Activated CD8-positive, alpha-beta memory T cell treated with anti-CD3 and anti-CD28 coated beads, Interleukin-2, amount 10 ng/mL, durations not matched to agents 7 days and 5 days (primary cell): ENCODE measurements at regions of chr14 and their contacts with region 1.

Region 1: DNA sequence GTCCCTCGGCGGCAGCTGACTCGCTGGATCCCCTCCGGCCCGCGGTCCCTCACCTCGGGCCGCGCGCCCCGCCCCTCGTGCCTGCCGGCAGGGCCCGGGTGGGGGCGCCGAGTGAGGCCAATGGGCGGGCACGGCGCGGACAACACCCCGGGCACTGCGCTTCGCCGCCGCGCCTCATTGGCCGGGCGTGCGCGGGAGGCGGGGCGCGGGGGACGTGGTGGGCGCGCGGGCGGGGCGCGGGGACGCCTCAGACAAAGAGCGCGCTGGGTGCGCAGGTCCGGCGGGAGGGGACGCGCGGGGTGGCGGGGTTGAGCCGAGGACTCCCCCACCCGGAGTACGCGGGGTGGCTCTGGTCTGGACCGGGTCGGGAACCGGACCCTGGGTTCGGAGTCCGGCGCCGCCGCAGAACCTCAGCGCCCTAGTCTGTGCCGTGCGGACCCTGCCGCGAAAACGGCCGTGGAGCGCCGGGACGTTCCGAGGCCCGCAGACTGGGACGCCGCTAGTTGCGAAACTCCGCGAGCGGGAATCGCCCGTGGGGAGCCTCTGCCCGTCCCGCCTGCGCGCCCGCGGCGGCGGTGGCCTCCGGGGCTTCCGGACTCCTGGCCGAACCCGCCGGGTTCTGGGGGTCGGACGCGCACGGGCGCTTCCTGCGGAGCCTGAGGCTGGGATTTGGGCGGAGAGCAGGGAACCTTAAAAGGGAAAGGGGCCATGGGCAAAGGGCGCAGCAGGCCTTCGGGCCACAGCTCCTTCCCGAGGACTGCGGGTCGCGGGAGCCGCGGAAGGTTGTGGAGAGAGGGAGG is at the start of gene SLC25A29:
- DNase-seq: peak; percentile 83
- ATAC-seq: peak; percentile 94
- H3K4me3 Mint-ChIP-seq: peak within 1 kb of the TSS; percentile 69
- H3K27ac Mint-ChIP-seq: no peak within 1 kb of the TSS
- H3K4me1 Mint-ChIP-seq: peaks cover 16% of the 10 kb centered on the region
- H3K27me3 Mint-ChIP-seq: peaks cover 22% of the 10 kb centered on the region
- total RNA-seq, gene SLC25A29: 15.9 to 21.6 TPM

Region 2: DNA sequence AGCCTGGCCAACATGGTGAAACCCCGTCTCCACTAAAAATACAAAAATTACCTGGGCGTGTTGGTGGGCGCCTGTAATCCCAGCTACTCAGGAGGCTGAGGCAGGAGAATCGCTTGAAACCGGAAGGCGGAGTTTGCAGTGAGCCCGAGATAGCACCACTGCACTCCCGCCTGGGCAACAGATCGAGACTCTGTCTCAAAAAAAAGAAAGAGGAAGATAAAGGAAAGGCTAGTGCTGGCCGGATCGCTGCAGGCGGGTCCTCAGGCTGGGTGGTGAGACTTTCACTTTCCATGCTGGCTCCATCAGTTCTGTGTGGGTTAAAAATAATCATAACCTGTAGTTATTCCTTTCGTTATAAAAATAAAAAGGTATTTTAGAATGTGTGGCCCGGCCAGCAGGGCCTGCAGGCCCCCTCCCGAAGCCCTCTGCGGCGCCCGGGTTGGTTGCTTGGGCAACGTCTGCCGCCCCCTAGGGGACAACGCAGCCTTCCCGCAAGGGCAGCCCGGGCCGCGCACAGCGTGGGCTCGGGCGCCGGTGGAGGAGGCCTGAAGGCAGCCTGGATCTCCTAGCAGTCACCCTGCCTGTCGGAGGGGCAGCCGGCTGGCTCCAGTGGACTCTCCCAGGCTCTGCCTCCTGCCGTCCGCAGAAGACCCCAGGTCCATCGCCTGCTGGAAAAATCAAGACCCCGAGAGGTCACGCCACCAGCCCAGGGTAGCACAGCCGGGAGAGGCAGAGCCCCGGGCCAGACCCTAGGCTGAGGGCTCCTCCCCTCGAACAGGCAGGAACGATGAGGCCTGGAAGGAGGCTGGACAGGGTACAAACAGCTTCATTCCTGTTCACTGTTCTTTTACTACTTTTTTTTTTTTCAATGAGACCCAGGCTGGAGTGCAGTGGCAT is 11.5 kb after region 1 on chr14:
- CTCF ChIA-PET with region 1: interaction called, 11 read pairs
- DNase-seq: peak; percentile 81
- ATAC-seq: peak; percentile 98
- H3K4me3 Mint-ChIP-seq: peak overlapping the region; percentile 64
- H3K27ac Mint-ChIP-seq: peak overlapping the region; percentile 49
- H3K4me1 Mint-ChIP-seq: peaks cover 6% of the 10 kb centered on the region
- H3K27me3 Mint-ChIP-seq: peaks cover 2% of the 10 kb centered on the region

Region 3: GRCh38 chr14:100330388-100330931 is 23.8 kb after region 1 on chr14:
- CTCF ChIA-PET with region 1: no interaction called
- DNase-seq: no peak
- ATAC-seq: peak; percentile 13
- H3K4me3 Mint-ChIP-seq: no peak overlapping the region
- H3K27ac Mint-ChIP-seq: no peak overlapping the region
- H3K4me1 Mint-ChIP-seq: no peaks in the 10 kb centered on the region
- H3K27me3 Mint-ChIP-seq: no peaks in the 10 kb centered on the region

Region 4: DNA sequence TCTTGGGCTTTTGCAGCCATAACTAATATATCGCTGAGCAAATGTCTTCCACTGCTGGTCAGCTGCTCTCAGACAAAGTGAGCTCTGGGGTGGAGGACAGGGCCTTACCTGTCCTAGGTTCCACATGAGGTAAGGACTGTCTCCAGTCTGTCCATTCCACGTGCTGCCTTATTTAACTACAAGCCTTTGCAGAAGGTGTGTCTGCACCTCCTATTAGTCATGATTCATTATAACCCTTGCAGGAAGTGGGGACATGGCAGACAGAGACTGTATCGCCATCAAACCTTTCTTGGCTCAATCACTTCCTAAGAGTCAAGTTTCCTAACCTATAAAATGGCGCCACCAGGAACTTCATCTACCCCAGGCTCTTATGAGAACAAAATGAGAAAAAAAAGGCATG is 63.4 kb after region 1 on chr14:
- CTCF ChIA-PET with region 1: no interaction called
- DNase-seq: no peak
- ATAC-seq: no peak
- H3K4me3 Mint-ChIP-seq: no peak overlapping the region
- H3K27ac Mint-ChIP-seq: peak overlapping the region; percentile 61
- H3K4me1 Mint-ChIP-seq: peaks cover 80% of the 10 kb centered on the region
- H3K27me3 Mint-ChIP-seq: no peaks in the 10 kb centered on the region